ENCODE measurements at regions of chr7 and their contacts with region 1.

Region 1: GRCh38 chr7:26864309-26865093 is at the start of gene SKAP2:
- DNase-seq: peak; percentile 77 to 84 (median 81)
- H3K4me3 ChIP-seq: peak within 1 kb of the TSS; percentile 72 to 78
- H3K4me3 Mint-ChIP-seq: peak within 1 kb of the TSS; percentile 84 to 97 (median 92)
- H3K27ac ChIP-seq: peak within 1 kb of the TSS; percentile 54
- H3K27ac Mint-ChIP-seq: peak within 1 kb of the TSS; percentile 63 to 96 (median 91)
- H3K4me1 ChIP-seq: peaks cover 22% of the 10 kb centered on the region
- H3K4me1 Mint-ChIP-seq: peaks cover 9 to 26% (median 18%) of the 10 kb centered on the region in 4 donors
- H3K27me3 ChIP-seq: peaks cover 6% of the 10 kb centered on the region
- H3K27me3 Mint-ChIP-seq: peaks cover 15 to 17% of the 10 kb centered on the region in 2 donors
- total RNA-seq, gene SKAP2: 6.8 to 8.5 TPM

Region 2: DNA sequence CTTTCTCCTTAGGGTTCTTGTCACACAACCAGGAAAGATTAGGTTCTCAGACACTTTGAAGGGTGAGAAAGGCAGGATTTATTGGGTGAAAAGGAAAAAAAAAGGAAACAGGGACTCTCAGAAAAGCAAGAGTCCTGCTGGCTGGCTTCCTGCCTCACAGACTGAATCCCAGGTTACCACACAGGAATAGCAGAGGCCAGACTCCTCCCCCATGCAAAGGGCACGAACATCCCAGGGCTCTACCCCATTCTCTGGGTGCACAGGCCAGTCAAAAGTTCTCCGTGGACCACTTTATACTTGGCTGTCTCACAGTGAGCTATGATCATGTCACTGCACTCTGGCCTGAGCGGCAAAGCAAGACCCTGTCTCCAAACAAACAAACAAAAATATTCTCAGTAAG is 188.7 kb after region 1 on chr7:
- CTCF ChIA-PET with region 1: no interaction called
- POLR2A ChIA-PET with region 1: no interaction called
- intact Hi-C with region 1: no loop called
- DNase-seq: no peak
- H3K4me3 ChIP-seq: no peak overlapping the region
- H3K4me3 Mint-ChIP-seq: no peak overlapping the region
- H3K27ac ChIP-seq: no peak overlapping the region
- H3K27ac Mint-ChIP-seq: no peak overlapping the region
- H3K4me1 ChIP-seq: no peaks in the 10 kb centered on the region
- H3K4me1 Mint-ChIP-seq: no peaks in the 10 kb centered on the region
- H3K27me3 ChIP-seq: no peaks in the 10 kb centered on the region
- H3K27me3 Mint-ChIP-seq: peaks cover 3 to 8% of the 10 kb centered on the region in 2 donors

Region 3: DNA sequence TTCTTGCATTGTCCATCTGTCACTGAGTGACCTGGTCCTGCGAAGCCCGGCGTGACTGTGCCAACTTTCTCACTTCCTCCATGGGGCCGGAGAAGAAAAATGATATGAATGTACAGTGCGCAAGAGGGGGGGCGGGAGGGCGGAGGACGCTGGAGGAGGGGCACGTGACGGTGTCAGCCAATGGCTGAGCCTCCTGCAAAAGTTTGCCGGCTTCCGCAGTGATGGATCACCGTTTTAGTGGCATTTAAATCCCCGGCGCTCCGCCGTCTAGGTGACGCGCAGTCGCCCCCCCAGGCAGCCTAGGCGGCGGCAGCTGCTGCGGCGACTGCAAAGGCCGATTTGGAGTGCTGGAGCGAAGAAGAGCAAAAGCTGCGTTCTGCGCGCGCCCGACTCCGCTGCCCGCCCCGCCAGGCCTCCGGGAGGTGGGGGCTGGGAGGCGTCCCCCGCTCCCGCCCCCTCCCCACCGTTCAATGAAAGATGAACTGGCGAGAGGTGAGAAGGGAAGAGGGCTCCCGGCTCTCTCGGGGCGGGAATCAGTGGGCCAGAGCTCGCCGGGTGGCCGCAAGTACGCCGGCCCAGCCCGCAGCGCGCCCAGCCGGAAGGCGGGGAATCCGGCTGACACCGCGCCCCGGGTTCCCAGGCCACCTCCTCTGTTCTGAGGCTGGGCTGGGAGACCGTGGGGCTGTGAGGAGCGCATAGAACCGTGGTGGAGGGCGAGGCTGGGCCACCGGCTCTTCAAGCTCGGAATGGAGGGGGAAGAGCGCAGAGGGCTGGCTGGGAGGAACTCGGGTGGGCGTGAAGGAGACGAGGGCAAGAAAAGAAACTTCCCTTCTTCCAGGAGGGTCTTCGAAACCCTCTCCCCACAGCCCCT is 231.6 kb after region 1 on chr7 and contains the start of gene HOXA1:
- CTCF ChIA-PET with region 1: no interaction called
- POLR2A ChIA-PET with region 1: interaction called, 4 read pairs
- intact Hi-C with region 1: loop called (anchors 1 kb)
- DNase-seq: peak; percentile 71 to 81 (median 74)
- H3K4me3 ChIP-seq: peak within 1 kb of the TSS; percentile 73 to 84
- H3K4me3 Mint-ChIP-seq: peak within 1 kb of the TSS; percentile 86 to 96 (median 93)
- H3K27ac ChIP-seq: peak within 1 kb of the TSS; percentile 36
- H3K27ac Mint-ChIP-seq: peak within 1 kb of the TSS; percentile 67 to 90 (median 87)
- H3K4me1 ChIP-seq: peaks cover 23% of the 10 kb centered on the region
- H3K4me1 Mint-ChIP-seq: peaks cover 11 to 46% (median 28%) of the 10 kb centered on the region in 4 donors
- H3K27me3 ChIP-seq: peaks cover 5% of the 10 kb centered on the region
- H3K27me3 Mint-ChIP-seq: peaks cover 33 to 61% of the 10 kb centered on the region in 2 donors
- total RNA-seq, gene HOXA1: 0.73 to 0.75 TPM

Region 4: DNA sequence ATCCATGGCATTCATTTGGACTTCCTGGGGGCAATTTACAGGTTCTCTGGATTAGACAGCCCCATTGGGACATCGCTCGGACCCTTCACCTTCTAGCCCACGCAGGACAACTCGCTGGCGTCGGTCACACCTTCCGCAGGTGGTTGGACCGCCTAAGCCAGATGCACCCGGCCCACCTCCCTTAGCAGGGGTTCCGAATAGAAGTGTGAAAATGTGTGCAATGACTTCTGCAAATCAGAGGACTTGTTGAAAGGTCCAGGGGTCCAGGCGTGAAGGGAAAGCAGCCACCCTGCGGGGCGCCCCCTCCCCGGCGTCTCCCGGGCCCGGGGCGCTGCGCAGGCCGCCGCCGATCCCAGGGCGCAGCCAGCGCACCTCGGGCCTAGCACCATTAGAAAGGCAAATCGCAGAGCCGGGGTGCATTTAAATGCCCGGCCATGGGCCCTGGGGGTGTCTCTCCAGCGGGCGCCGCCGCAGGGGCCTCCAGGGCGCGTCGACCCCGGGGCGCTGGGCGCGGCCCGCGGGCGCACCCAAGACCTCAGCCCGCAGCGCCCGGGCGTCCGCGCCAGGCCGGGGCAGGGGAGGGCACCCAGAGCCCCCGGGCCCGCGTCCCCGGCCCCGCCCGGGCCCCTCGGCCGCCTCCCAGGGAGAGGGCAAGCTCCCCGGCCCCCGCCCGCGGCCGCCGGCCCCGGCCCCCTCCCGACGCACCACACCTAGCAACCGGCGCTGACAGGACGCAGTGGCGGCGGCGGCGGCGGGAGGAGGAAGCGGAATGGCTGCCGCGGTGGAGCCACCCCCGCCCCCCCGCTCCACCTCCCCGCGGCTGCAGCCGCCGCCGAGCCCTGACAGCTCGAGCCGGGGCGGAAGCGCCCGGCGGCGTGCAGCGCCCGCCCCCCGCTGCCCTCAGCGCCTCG is 1314.9 kb after region 1 on chr7:
- CTCF ChIA-PET with region 1: no interaction called
- POLR2A ChIA-PET with region 1: no interaction called
- intact Hi-C with region 1: loop called (anchors 5 kb)
- DNase-seq: peak; percentile 70 to 81 (median 75)
- H3K4me3 ChIP-seq: peak overlapping the region; percentile 21 to 56
- H3K4me3 Mint-ChIP-seq: peak overlapping the region; percentile 75 to 90 (median 85)
- H3K27ac ChIP-seq: peak overlapping the region; percentile 1
- H3K27ac Mint-ChIP-seq: peak overlapping the region; percentile 74 to 96 (median 92)
- H3K4me1 ChIP-seq: peaks cover 14% of the 10 kb centered on the region
- H3K4me1 Mint-ChIP-seq: peaks cover 19 to 28% (median 24%) of the 10 kb centered on the region in 4 donors
- H3K27me3 ChIP-seq: no peaks in the 10 kb centered on the region
- H3K27me3 Mint-ChIP-seq: peaks cover 0 to 1% of the 10 kb centered on the region in 2 donors

Measured in CD4-positive, alpha-beta memory T cell (primary cell).